ENCODE measurements at regions of chr1 and their contacts with region 1.

Region 1: DNA sequence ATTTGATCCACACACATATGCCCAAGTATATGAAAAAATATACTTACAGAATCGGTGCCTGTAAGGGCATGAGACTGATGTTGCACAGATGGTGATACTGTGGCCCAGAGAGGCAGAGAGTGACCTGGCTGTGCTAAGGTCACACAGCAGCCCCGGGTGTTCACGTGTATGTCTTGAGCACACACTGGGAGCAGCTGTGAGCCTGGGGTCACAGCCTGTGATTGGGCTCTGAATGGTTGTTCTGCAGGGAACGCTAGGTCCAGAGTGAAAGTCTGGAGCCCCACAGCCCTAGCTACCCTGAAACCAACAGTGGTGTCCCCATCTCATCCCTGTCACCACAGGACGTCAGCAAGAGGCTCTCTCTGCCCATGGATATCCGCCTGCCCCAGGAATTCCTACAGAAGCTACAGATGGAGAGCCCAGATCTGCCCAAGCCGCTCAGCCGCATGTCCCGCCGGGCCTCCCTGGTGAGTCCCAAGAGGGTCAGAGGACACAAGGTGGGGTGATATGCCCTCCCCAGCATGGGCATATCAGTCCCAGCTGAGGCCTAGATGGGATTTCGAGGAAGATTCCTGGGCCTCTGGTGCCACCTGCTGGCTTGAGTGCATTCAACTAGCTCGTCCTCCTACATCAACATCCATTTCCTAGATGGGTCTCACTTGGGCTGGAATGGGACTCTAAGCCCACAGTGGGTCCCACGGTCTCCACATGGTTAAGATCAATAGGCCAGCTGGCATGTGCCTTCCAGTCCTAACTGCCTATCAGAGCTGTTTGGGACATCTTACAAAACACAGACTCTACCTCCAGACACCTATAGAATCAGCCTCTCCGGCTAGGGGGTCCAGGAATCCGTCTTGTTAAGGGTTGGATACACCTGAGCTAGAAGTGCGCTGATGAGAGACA is 19.7 kb downstream of the CDK18 start:
- DNase-seq: peak; percentile 75 to 85 (median 80)
- ATAC-seq: peak; percentile 79
- H3K4me3 ChIP-seq: no peak overlapping the region
- H3K27ac ChIP-seq: no peak overlapping the region
- H3K4me1 ChIP-seq: peaks cover 0 to 23% of the 10 kb centered on the region in 2 experiments; a peak in 2 of 5 replicates
- H3K27me3 ChIP-seq: peaks cover 25 to 77% of the 10 kb centered on the region in 2 experiments
- CTCF ChIP-seq: peak; percentile 85 to 93 (median 93)
- EP300 ChIP-seq: no peak
- POLR2A ChIP-seq: no peak
- RAD21 ChIP-seq: peak; percentile 95 to 97

Region 2: GRCh38 chr1:205273551-205273982 is 250.6 kb before region 1 on chr1:
- CTCF ChIA-PET with region 1: interaction called, 10 read pairs
- POLR2A ChIA-PET with region 1: interaction called, 5 read pairs
- in situ Hi-C with region 1: no loop called
- intact Hi-C with region 1: loop called (anchors 1 kb)
- DNase-seq: peak; percentile 88 to 92 (median 90)
- ATAC-seq: peak; percentile 94
- H3K4me3 ChIP-seq: no peak overlapping the region
- H3K27ac ChIP-seq: no peak overlapping the region
- H3K4me1 ChIP-seq: peaks cover 6 to 29% of the 10 kb centered on the region in 2 experiments
- H3K27me3 ChIP-seq: peaks cover 1 to 13% of the 10 kb centered on the region in 2 experiments; a peak in 4 of 5 replicates
- CTCF ChIP-seq: peak; percentile 96 to 99 (median 98)
- EP300 ChIP-seq: 0 out of 2 replicates have a peak, but pooled peaks have one; percentile 12
- POLR2A ChIP-seq: no peak
- RAD21 ChIP-seq: peak; percentile 99

Region 3: DNA sequence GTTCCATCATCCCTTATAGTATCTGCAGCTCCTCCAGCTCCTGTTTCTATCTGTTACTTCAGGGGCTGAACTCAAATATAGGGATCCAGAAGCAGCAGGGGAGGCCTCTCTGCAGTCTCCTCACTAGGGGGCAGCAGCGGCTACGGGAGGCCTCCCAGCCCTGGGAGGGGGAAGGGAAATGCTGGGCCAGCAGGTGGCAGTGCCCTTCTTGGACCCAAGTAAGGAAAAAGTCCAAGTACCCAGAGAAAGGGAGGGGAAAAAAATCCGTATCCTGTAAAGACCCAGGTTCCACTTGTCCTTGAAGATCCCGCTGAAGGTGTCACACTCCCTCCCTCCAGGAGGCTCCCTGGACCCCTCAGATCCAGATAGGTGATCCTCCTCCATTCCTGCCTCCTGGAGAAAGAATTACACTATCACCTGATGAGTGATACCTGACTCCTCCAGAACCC is 188.5 kb before region 1 on chr1:
- CTCF ChIA-PET with region 1: interaction called, 28 read pairs
- POLR2A ChIA-PET with region 1: interaction called, 3 read pairs
- in situ Hi-C with region 1: no loop called
- intact Hi-C with region 1: loop called (anchors 1 kb)
- DNase-seq: peak; percentile 83 to 92 (median 88)
- ATAC-seq: peak; percentile 97
- H3K4me3 ChIP-seq: no peak overlapping the region
- H3K27ac ChIP-seq: no peak overlapping the region
- H3K4me1 ChIP-seq: no peaks in the 10 kb centered on the region
- H3K27me3 ChIP-seq: peaks cover 17 to 62% of the 10 kb centered on the region in 2 experiments
- CTCF ChIP-seq: peak; percentile 99 to 100 (median 99)
- EP300 ChIP-seq: no peak; the same call in 1 of the 2 replicates
- POLR2A ChIP-seq: no peak
- RAD21 ChIP-seq: peak; percentile 77 to 93

Region 4: GRCh38 chr1:205354259-205354904 is 169.8 kb before region 1 on chr1:
- CTCF ChIA-PET with region 1: interaction called, 11 read pairs
- POLR2A ChIA-PET with region 1: interaction called, 5 read pairs
- in situ Hi-C with region 1: no loop called
- intact Hi-C with region 1: loop called (anchors 1 kb)
- DNase-seq: peak; percentile 50 to 79 (median 72)
- ATAC-seq: peak; percentile 89
- H3K4me3 ChIP-seq: no peak overlapping the region
- H3K27ac ChIP-seq: no peak overlapping the region
- H3K4me1 ChIP-seq: peaks cover 0 to 3% of the 10 kb centered on the region in 2 experiments; a peak in 1 of 5 replicates
- H3K27me3 ChIP-seq: peaks cover 39 to 70% of the 10 kb centered on the region in 2 experiments
- CTCF ChIP-seq: peak; percentile 80 to 92 (median 86)
- EP300 ChIP-seq: no peak
- POLR2A ChIP-seq: no peak
- RAD21 ChIP-seq: peak; percentile 67 to 81

Region 5: DNA sequence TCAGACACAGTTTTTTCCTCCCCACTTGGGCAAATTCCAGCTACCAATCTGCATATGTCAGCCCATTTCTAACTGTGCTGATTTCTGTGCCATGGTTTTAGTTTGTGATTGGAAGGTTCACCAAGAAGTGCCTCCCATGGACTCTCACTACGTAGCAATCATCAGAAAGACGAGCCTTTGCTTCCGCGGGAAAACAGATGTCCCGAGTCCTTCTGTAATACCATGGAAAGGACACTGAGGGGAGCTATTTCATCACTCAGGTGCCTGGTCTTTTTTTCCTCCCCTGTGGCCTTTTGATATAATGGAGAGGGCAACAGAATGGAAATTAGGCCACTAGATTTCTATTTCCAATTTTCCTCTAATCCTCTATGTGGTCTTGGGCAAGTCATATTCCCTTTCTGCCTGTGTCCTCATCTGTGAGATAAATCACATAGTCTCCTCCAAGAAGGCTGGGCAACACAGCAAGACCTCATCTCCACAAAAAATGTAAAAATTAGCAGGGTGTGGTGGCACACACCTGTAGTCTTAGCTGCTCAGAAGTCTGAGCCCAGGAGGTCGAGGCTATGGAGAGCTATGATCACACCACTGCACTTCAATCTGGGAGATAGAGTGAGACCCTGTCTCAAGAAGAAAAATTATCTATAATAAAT is 127.0 kb before region 1 on chr1:
- CTCF ChIA-PET with region 1: interaction called, 21 read pairs
- POLR2A ChIA-PET with region 1: interaction called, 3 read pairs
- in situ Hi-C with region 1: no loop called
- intact Hi-C with region 1: loop called (anchors 1 kb)
- DNase-seq: peak; percentile 68 to 76 (median 70)
- ATAC-seq: peak; percentile 86
- H3K4me3 ChIP-seq: no peak overlapping the region
- H3K27ac ChIP-seq: no peak overlapping the region
- H3K4me1 ChIP-seq: no peaks in the 10 kb centered on the region
- H3K27me3 ChIP-seq: no peaks in the 10 kb centered on the region; a peak in 1 of 5 replicates
- CTCF ChIP-seq: peak; percentile 86 to 97 (median 91)
- EP300 ChIP-seq: no peak
- POLR2A ChIP-seq: no peak
- RAD21 ChIP-seq: peak; percentile 94 to 98